Activated CD8-positive, alpha-beta T cell treated with anti-CD3 and anti-CD28 coated beads for 36 hours (primary cell): ENCODE measurements at regions of chr2 and their contacts with region 1.

Region 1: DNA sequence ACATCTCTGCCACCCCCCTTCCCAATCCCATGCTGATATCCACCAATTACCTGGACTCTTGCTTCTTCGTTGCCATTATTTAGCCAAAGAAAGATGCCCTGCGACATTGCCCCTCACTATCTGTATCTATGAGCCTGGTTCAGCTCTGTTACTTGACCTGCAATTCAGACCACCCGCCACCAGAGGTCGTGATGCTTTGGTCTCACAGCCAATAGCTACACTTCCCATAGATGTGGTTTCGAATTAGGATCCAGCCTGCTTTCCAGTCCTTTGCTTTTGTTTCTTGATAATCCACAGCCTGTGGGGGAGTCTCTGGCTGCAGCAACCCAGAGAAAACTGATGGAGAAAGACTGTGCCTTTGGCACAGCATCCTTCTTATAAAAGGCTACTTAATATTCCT is 239.4 kb downstream of the KLHL29 start:
- DNase-seq: peak; percentile 59
- ATAC-seq: peak; percentile 30
- H3K4me3 Mint-ChIP-seq: no peak overlapping the region
- H3K27ac Mint-ChIP-seq: no peak overlapping the region
- H3K4me1 Mint-ChIP-seq: no peaks in the 10 kb centered on the region
- H3K27me3 Mint-ChIP-seq: no peaks in the 10 kb centered on the region
- CTCF ChIP-seq: peak; percentile 58

Region 2: GRCh38 chr2:23635442-23636340 is 11.3 kb after region 1 on chr2:
- CTCF ChIA-PET with region 1: interaction called, 10 read pairs
- POLR2A ChIA-PET with region 1: no interaction called
- intact Hi-C with region 1: no loop called
- DNase-seq: no peak
- ATAC-seq: no peak
- H3K4me3 Mint-ChIP-seq: no peak overlapping the region
- H3K27ac Mint-ChIP-seq: no peak overlapping the region
- H3K4me1 Mint-ChIP-seq: no peaks in the 10 kb centered on the region
- H3K27me3 Mint-ChIP-seq: no peaks in the 10 kb centered on the region
- CTCF ChIP-seq: no peak